Mammary epithelial cell (primary cell): ENCODE measurements at regions of chr1 and their contacts with region 1.

Region 1: GRCh38 chr1:243549108-243549507 is 293.3 kb downstream of the SDCCAG8 start:
- DNase-seq: peak; percentile 56
- H3K4me3 ChIP-seq: no peak overlapping the region
- H3K27ac ChIP-seq: no peak overlapping the region
- H3K4me1 ChIP-seq: peaks cover 19% of the 10 kb centered on the region
- H3K27me3 ChIP-seq: no peaks in the 10 kb centered on the region
- CTCF ChIP-seq: no peak

Region 2: GRCh38 chr1:242886137-242886536 is 663.0 kb before region 1 on chr1:
- CTCF ChIA-PET with region 1: no interaction called
- dilution Hi-C with region 1: no loop called
- in situ Hi-C with region 1: no loop called
- intact Hi-C with region 1: no loop called
- DNase-seq: no peak
- H3K4me3 ChIP-seq: no peak overlapping the region
- H3K27ac ChIP-seq: no peak overlapping the region
- H3K4me1 ChIP-seq: no peaks in the 10 kb centered on the region
- H3K27me3 ChIP-seq: peaks cover 5% of the 10 kb centered on the region
- CTCF ChIP-seq: no peak

Region 3: DNA sequence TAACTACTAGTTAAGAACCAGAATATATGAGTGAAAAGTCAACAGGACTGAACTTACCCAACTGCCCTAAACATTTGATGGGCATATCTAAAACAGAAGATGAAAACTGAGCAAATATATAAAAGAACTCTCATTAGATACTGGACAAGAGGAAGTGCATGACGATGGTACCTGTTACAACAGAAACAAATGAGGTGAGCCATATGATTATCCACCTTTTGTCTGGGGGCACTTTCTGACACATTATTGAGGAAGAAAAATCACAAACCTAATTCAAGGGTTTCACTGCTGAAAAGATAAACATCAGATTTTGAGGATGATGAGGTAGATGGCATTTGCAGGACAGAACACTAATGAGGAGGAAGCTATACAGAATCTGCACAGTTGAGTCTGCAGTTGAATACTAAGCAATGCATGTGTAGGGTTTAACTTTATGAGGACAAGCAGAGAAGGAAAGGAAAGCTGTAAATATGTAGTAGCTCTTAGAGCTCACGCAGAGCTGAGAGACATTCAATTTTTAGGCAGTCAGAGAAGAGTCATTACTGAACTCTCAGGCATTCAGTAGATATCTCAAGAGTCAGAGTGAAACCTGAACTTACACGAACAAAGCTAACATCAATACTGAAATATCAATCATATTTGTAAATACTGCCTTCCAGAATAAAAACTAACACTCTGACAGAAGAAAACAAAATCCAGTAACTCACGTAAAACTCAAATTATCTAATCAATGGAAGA is 38.9 kb after region 1 on chr1:
- CTCF ChIA-PET with region 1: no interaction called
- dilution Hi-C with region 1: no loop called
- in situ Hi-C with region 1: no loop called
- intact Hi-C with region 1: no loop called
- DNase-seq: no peak
- H3K4me3 ChIP-seq: no peak overlapping the region
- H3K27ac ChIP-seq: no peak overlapping the region
- H3K4me1 ChIP-seq: no peaks in the 10 kb centered on the region
- H3K27me3 ChIP-seq: no peaks in the 10 kb centered on the region
- CTCF ChIP-seq: no peak

Region 4: DNA sequence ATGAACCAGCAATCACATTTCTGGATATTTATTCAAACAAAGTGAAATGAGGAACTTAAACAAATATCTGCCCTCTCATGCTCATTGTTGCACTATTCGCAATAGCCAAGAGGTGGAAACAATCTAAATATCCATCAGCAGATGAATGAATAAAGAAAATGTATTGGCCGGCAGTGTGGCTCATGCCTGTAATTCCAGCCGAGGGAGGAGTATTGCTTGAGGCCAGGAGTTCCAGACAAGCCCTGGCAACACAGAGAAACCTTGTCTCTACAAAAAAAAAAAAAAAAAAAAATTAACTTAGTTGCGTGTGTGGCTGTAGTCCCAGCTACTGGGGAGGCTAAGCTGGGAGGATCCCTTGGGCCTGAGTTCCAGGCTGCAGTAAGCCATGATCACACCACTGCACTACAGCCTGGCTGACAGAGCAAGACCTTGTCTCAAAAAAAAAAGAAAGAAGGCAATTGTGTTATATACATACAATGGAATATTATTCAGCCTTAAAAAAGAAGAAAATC is 109.5 kb after region 1 on chr1:
- CTCF ChIA-PET with region 1: no interaction called
- dilution Hi-C with region 1: no loop called
- in situ Hi-C with region 1: no loop called
- intact Hi-C with region 1: loop called (anchors 10 kb)
- DNase-seq: peak; percentile 84
- H3K4me3 ChIP-seq: no peak overlapping the region
- H3K27ac ChIP-seq: peak overlapping the region; percentile 64
- H3K4me1 ChIP-seq: peaks cover 15% of the 10 kb centered on the region
- H3K27me3 ChIP-seq: no peaks in the 10 kb centered on the region
- CTCF ChIP-seq: no peak